HEK293T (cell line): ENCODE measurements at regions of chr17 and their contacts with region 1.

Region 1: DNA sequence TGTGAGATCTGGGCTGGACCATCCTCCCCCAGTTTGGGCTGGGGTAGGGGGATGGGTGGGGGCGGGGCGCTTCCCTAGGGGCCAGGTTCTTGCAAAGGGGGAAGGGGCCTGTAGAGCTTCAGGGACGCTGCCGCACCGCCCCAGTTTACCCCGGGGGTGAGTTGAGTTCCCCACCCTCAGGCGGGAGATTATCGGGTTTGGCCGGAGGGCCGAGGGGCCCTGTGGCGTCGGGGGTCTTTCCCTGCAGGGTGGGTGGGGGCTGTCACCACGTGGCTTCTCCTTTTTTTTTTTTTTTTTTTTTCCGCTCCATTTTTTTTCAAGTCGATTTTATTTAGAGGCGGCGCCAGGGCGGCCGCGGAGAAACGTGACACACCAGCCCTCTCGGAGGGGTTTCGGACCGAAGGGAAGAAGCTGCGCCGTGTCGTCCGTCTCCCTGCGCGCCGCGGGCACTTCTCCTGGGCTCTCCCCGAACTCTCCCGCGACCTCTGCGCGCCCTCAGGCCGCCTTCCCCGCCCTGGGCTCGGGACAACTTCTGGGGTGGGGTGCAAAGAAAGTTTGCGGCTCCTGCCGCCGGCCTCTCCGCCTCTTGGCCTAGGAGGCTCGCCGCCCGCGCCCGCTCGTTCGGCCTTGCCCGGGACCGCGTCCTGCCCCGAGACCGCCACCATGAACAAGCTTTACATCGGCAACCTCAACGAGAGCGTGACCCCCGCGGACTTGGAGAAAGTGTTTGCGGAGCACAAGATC is at the start of gene IGF2BP1:
- DNase-seq: peak; percentile 65

Region 2: GRCh38 chr17:48892940-48893645 is 104.2 kb before region 1 on chr17:
- CTCF ChIA-PET with region 1: no interaction called
- POLR2A ChIA-PET with region 1: interaction called, 15 read pairs
- DNase-seq: no peak

Region 3: DNA sequence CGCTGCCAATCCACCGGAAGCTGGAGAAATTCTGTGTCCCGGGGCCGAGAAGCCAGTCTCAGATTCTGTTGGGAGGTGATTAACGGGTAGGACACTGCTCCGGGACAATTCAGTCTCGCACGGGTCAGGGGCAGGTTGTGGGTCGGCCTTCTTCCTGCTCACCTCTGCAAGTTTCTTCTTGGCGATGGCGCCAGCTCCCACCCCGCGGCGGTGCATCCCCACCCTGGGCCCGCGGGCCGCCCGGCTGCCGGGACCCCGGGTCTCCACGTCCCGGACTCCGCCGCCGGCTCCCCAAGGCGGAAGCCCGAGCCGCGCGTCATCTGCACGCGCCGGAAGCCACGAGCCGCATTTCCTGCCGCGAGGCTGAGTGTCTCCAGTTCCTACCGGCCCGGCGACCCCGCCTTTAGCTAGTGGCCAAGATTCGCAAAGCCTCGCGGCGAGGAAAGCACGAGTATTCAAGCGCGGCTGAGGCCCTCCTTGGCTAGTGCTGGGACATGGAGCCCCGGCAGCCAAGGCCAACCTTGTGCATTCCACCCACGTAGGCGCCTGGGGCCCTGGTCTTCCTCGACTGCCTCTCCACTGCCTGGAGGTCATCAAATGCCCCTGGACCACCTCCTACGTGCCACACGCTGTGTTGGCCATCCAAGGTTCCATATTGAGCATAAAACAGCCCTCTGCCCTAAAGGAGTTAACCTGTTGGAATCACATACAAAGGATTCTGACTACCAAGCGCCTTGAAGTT is 52.6 kb before region 1 on chr17 and contains the start of gene SNF8:
- CTCF ChIA-PET with region 1: no interaction called
- POLR2A ChIA-PET with region 1: interaction called, 45 read pairs
- DNase-seq: peak; percentile 97

Region 4: DNA sequence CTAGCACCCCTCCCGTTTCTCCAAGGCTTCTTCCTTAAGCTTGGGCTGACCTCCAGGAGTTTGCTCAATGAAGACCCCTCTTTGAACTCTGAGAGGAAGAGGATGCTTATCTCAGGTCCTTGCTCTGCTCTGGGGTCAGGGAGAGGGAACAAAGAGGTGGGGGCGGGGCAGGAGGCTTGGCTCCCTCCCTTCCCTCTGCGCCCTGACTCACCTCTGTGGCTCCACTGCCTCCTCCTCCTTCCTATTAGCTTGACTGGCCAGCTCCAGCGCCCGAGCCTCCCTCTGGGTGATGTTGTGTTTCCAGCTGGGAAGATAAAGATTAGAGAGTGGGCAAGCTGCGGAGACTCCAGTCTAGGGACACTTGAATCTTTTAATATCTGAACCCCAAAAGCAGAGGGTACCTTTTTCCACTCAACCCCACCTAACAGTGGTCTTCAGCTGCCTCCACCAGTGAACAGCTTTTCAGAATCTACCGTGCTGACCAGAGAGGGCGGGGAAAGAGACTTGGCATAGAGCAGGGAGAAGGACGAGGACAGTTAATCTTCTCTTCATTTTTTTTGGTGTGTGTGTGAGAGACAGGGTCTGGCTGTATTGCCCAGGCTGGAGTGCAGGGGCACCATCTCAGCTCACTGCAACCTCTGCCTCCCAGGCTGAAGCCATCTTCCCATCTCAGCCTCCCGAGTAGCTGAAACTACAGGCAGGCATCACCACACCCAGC is 35.6 kb before region 1 on chr17:
- CTCF ChIA-PET with region 1: interaction called, 4 read pairs
- POLR2A ChIA-PET with region 1: interaction called, 47 read pairs
- DNase-seq: no peak

Region 5: DNA sequence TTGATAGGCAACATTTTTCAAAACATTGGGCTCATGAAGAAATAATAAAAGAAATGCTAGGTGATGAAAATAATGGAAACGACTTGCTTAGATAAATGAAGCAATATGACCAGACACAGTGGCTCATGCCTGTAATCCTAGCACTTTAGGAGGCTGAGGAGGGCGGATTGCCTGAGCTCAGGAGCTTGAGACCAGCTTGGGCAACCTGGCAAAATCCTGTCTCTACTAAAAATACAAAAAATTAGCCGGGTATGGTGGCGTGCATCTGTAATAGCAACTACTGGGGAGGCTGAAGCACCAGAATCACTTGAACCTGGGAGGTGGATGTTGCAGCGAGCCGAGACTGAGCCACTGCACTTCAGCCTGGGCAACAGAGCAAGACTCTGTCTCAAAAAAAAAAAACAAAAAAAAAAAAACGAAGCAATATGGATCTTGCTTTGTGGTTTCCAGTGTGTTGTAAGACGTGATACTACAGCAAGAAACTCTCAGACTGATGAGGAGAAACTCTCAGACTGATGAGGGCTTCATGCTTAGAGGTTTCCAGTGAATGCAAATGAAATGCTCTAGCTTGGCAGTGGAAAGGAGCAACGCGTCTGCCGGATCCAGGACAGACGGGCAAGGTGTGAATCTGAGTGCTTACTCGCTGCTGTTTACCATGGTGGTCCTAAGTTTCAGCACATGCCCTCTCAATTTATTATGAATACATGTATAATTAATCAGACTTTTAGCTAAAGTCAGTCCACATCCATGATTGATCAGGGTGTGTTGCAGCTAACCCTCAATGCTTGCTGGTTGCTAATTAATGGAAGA is 11.6 kb before region 1 on chr17:
- CTCF ChIA-PET with region 1: no interaction called
- POLR2A ChIA-PET with region 1: interaction called, 16 read pairs
- DNase-seq: no peak

Region 6: GRCh38 chr17:49031965-49032928 is 35.0 kb after region 1 on chr17:
- CTCF ChIA-PET with region 1: interaction called, 13 read pairs
- POLR2A ChIA-PET with region 1: interaction called, 25 read pairs
- DNase-seq: peak; percentile 89

Region 7: DNA sequence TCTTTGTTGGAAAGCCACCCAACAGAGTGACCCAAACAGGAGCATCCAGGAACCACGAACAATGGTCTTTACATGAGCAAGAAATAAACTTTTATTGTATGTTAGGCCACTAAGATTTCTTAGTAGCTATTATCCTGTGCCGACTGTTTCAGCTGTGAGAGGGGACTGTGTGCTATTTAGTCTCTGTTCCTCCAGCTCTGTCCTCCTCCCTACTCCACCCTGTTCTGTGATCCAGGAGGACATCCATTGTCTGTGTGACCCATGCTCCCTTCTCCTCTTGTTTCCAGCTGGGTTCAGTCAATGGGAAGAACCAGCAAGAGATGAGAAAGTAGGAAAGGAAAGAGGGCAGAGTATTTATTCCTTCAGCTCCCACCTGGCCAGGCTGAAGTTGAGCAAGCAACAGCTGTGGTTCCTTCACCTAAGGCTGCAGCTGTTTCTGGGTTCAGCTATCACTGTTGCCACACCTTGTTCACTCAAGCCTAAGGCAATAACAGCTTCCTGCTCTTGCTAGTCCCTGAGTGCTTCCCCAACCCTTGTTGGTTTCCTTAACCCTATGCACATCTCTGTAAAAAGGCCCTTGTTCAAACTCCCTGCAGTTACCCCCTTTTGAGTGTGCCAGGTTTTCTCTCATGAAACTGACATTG is 120.5 kb after region 1 on chr17:
- CTCF ChIA-PET with region 1: no interaction called
- POLR2A ChIA-PET with region 1: no interaction called
- DNase-seq: no peak

Region 8: GRCh38 chr17:49157784-49158183 is 160.5 kb after region 1 on chr17:
- CTCF ChIA-PET with region 1: no interaction called
- POLR2A ChIA-PET with region 1: no interaction called
- DNase-seq: no peak